ENCODE measurements at regions of chr1 and their contacts with region 1.

Region 1: GRCh38 chr1:67685067-67685557 is at the start of gene GADD45A:
- DNase-seq: peak; percentile 98 to 99
- ATAC-seq: peak; percentile 93 to 96 (median 94)
- H3K4me3 ChIP-seq: peak within 1 kb of the TSS; percentile 59 to 97 (median 90)
- H3K27ac ChIP-seq: peak within 1 kb of the TSS; percentile 94 to 100 (median 98)
- H3K4me1 ChIP-seq: peaks cover 2 to 52% (median 35%) of the 10 kb centered on the region in 9 donors
- H3K27me3 ChIP-seq: no peaks in the 10 kb centered on the region
- CTCF ChIP-seq: peak in 1 of 9 donors; percentile 7
- total RNA-seq, gene GADD45A: 26.2 to 148 (median 72.7) TPM

Region 2: GRCh38 chr1:67535474-67535873 is 149.6 kb before region 1 on chr1:
- intact Hi-C with region 1: loop called in 5 of 10 experiments (anchors 1 to 10 kb)
- DNase-seq: peak; percentile 72 to 73
- ATAC-seq: peak in 7 of 8 donors; percentile 72 to 88 (median 79)
- H3K4me3 ChIP-seq: no peak overlapping the region
- H3K27ac ChIP-seq: no peak overlapping the region
- H3K4me1 ChIP-seq: peaks cover 0 to 14% (median 9%) of the 10 kb centered on the region in 9 donors
- H3K27me3 ChIP-seq: no peaks in the 10 kb centered on the region
- CTCF ChIP-seq: peak; percentile 63 to 93 (median 89)

Region 3: GRCh38 chr1:67570473-67571143 is 114.5 kb before region 1 on chr1:
- intact Hi-C with region 1: loop called in 4 of 10 experiments (anchors 10 kb)
- DNase-seq: no peak
- ATAC-seq: peak in 5 of 8 donors; percentile 12 to 60 (median 51)
- H3K4me3 ChIP-seq: no peak overlapping the region
- H3K27ac ChIP-seq: no peak overlapping the region
- H3K4me1 ChIP-seq: peaks cover 0 to 29% (median 14%) of the 10 kb centered on the region in 9 donors
- H3K27me3 ChIP-seq: no peaks in the 10 kb centered on the region
- CTCF ChIP-seq: no peak

Region 4: GRCh38 chr1:67723620-67724019 is 38.5 kb after region 1 on chr1:
- intact Hi-C with region 1: loop called in 2 of 10 experiments (anchors 2 to 5 kb)
- DNase-seq: peak in 1 of 2 donors; percentile 37
- ATAC-seq: peak; percentile 55 to 81 (median 80)
- H3K4me3 ChIP-seq: no peak overlapping the region
- H3K27ac ChIP-seq: peak overlapping the region in 9 of 10 donors; percentile 44 to 84 (median 71)
- H3K4me1 ChIP-seq: peaks cover 9 to 65% (median 43%) of the 10 kb centered on the region in 9 donors
- H3K27me3 ChIP-seq: no peaks in the 10 kb centered on the region
- CTCF ChIP-seq: no peak

Region 5: DNA sequence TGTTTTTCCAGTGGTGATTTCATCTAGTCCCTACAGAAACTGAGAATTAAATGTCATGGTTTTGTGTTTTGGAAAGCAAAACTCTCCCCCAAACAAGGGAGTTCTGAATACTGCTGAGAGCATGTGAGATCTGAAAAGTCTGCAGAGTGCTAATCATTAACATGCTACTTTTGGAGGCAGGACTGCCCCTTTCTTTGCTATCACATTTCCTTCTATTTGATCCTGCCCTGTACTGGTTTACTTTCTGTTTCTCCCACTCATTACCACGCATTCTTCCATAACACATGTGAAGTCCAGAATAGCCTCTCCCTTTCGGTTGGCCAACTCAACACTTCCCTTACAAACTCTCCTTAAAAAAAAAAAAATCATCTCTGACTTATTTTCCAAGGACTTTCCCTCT is 63.5 kb after region 1 on chr1:
- intact Hi-C with region 1: loop called in 3 of 10 experiments (anchors 2 to 5 kb)
- DNase-seq: no peak
- ATAC-seq: peak; percentile 55 to 81 (median 78)
- H3K4me3 ChIP-seq: peak overlapping the region in 6 of 10 donors; percentile 5 to 31 (median 14)
- H3K27ac ChIP-seq: peak overlapping the region; percentile 38 to 76 (median 64)
- H3K4me1 ChIP-seq: peaks cover 5 to 68% (median 50%) of the 10 kb centered on the region in 9 donors
- H3K27me3 ChIP-seq: no peaks in the 10 kb centered on the region
- CTCF ChIP-seq: no peak

Region 6: GRCh38 chr1:67832737-67833601 is 147.9 kb after region 1 on chr1 and contains the start of gene GNG12:
- intact Hi-C with region 1: loop called in 1 of 10 experiments (anchors 10 kb)
- DNase-seq: peak; percentile 68 to 75
- ATAC-seq: peak; percentile 69 to 93 (median 86)
- H3K4me3 ChIP-seq: peak within 1 kb of the TSS; percentile 60 to 94 (median 80)
- H3K27ac ChIP-seq: peak within 1 kb of the TSS; percentile 53 to 89 (median 84)
- H3K4me1 ChIP-seq: peaks cover 0 to 33% (median 18%) of the 10 kb centered on the region in 9 donors
- H3K27me3 ChIP-seq: peaks cover 0 to 61% (median 0%) of the 10 kb centered on the region in 7 donors
- CTCF ChIP-seq: no peak
- total RNA-seq, gene GNG12: 32.0 to 49.4 (median 35.8) TPM